GM12878 (cell line): ENCODE measurements at regions of chrX and their contacts with region 1.

Region 1: GRCh38 chrX:18390941-18391538 is 34.4 kb upstream of the CDKL5 start:
- DNase-seq: peak; percentile 13
- ATAC-seq: peak; percentile 67
- H3K4me3 ChIP-seq: no peak overlapping the region
- H3K27ac ChIP-seq: no peak overlapping the region
- H3K4me1 ChIP-seq: no peaks in the 10 kb centered on the region
- H3K27me3 ChIP-seq: no peaks in the 10 kb centered on the region
- CTCF ChIP-seq: peak; percentile 35 to 73 (median 68); a peak in 5 of 6 replicates
- EP300 ChIP-seq: no peak
- POLR2A ChIP-seq: no peak
- RAD21 ChIP-seq: peak; percentile 92

Region 2: DNA sequence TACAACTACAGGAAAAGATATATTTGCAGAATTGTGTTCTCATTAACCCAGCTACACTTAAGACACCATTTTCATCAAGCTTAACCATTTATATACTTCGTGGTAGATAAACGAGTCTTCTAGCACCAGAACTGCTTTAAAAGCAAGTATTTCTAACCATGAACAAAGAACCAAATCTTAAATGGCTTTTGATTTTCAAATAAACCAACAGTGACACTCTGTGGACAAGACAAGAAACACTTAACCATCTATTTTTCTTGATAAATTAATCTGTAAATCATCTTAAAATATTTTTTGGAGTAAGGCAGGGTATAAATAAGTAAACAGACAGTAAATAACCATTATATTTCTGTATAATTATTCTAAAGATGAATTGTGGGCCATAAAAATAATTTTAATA is 180.6 kb before region 1 on chrX:
- CTCF ChIA-PET with region 1: no interaction called
- POLR2A ChIA-PET with region 1: no interaction called
- RAD21 ChIA-PET with region 1: no interaction called
- SMC1A ChIA-PET with region 1: no interaction called
- in situ Hi-C with region 1: no loop called
- intact Hi-C with region 1: no loop called
- DNase-seq: no peak
- ATAC-seq: no peak
- H3K4me3 ChIP-seq: no peak overlapping the region
- H3K27ac ChIP-seq: no peak overlapping the region
- H3K4me1 ChIP-seq: no peaks in the 10 kb centered on the region
- H3K27me3 ChIP-seq: no peaks in the 10 kb centered on the region
- CTCF ChIP-seq: no peak
- EP300 ChIP-seq: no peak
- POLR2A ChIP-seq: no peak
- RAD21 ChIP-seq: 0 out of 2 replicates have a peak, but pooled peaks have one; percentile 2

Region 3: GRCh38 chrX:18354369-18355223 is 36.4 kb before region 1 on chrX and contains the start of gene SCML2:
- CTCF ChIA-PET with region 1: no interaction called
- POLR2A ChIA-PET with region 1: no interaction called
- RAD21 ChIA-PET with region 1: no interaction called
- SMC1A ChIA-PET with region 1: no interaction called
- in situ Hi-C with region 1: no loop called
- intact Hi-C with region 1: no loop called
- DNase-seq: no peak
- ATAC-seq: peak; percentile 74
- H3K4me3 ChIP-seq: no peak within 1 kb of the TSS; the same call in 1 of the 2 replicates
- H3K27ac ChIP-seq: no peak within 1 kb of the TSS
- H3K4me1 ChIP-seq: no peaks in the 10 kb centered on the region
- H3K27me3 ChIP-seq: peaks cover 0 to 3% of the 10 kb centered on the region in 2 experiments; a peak in 2 of 4 replicates
- CTCF ChIP-seq: no peak
- EP300 ChIP-seq: no peak
- POLR2A ChIP-seq: no peak
- RAD21 ChIP-seq: no peak
- polyA plus RNA-seq, gene SCML2: 1.5 to 2.9 TPM

Region 4: DNA sequence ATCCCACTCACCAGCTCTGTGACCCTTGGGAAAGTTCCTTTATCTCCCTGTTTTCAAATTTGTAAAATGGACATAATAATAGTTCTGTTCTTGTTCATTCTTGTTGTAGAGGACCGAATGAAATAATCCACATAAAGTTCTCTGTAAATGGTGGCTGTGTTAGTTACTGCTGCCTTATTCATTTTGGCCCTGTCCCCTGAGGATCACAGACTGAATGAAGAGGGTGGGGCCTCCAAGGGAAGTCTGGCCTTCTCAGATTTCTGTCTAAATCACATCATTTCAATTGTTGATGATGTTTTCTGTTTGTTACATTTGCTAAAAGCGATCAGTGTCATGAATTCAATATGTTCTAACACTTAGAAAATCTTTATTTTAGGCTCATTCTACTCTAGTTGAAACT is 434.3 kb after region 1 on chrX:
- CTCF ChIA-PET with region 1: no interaction called
- POLR2A ChIA-PET with region 1: no interaction called
- RAD21 ChIA-PET with region 1: no interaction called
- SMC1A ChIA-PET with region 1: no interaction called
- in situ Hi-C with region 1: no loop called
- intact Hi-C with region 1: no loop called
- DNase-seq: no peak
- ATAC-seq: no peak
- H3K4me3 ChIP-seq: no peak overlapping the region
- H3K27ac ChIP-seq: no peak overlapping the region
- H3K4me1 ChIP-seq: no peaks in the 10 kb centered on the region
- H3K27me3 ChIP-seq: no peaks in the 10 kb centered on the region
- CTCF ChIP-seq: no peak
- EP300 ChIP-seq: no peak
- POLR2A ChIP-seq: no peak
- RAD21 ChIP-seq: no peak

Region 5: GRCh38 chrX:18886344-18887161 is 495.5 kb after region 1 on chrX:
- CTCF ChIA-PET with region 1: interaction called, 5 read pairs
- POLR2A ChIA-PET with region 1: no interaction called
- RAD21 ChIA-PET with region 1: interaction called, 4 read pairs
- SMC1A ChIA-PET with region 1: interaction called, 3 read pairs
- in situ Hi-C with region 1: loop called (anchors 10 kb)
- intact Hi-C with region 1: loop called (anchors 5 kb)
- DNase-seq: peak; percentile 66
- ATAC-seq: peak; percentile 87
- H3K4me3 ChIP-seq: peak overlapping the region; percentile 47
- H3K27ac ChIP-seq: peak overlapping the region; percentile 87
- H3K4me1 ChIP-seq: peaks cover 28% of the 10 kb centered on the region
- H3K27me3 ChIP-seq: no peaks in the 10 kb centered on the region
- CTCF ChIP-seq: peak; percentile 62 to 70 (median 69)
- EP300 ChIP-seq: no peak
- POLR2A ChIP-seq: 0 out of 2 replicates have a peak, but pooled peaks have one; percentile 34
- RAD21 ChIP-seq: peak; percentile 66

Region 6: DNA sequence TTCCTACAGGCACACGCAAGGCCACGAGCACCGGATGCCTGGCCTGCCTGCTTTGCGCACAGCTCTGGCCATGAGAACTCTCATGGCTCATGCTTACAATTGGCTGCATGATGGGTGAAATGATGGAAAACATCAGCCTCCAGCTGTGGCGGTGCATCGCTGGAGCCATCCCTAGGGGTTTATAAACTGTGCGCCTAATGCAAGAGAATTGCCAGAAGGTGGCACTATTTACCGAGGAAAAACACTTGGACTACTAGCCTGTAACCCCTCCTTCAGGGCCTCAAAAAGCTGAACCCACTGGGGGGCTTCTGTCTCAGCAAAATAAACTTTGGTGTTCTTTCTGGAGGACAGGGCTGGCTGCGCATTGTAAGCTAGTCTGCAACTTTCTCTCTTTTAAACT is 540.9 kb after region 1 on chrX:
- CTCF ChIA-PET with region 1: no interaction called
- POLR2A ChIA-PET with region 1: no interaction called
- RAD21 ChIA-PET with region 1: no interaction called
- SMC1A ChIA-PET with region 1: no interaction called
- in situ Hi-C with region 1: no loop called
- intact Hi-C with region 1: loop called (anchors 10 kb)
- DNase-seq: no peak
- ATAC-seq: peak; percentile 59
- H3K4me3 ChIP-seq: no peak overlapping the region
- H3K27ac ChIP-seq: no peak overlapping the region
- H3K4me1 ChIP-seq: no peaks in the 10 kb centered on the region
- H3K27me3 ChIP-seq: no peaks in the 10 kb centered on the region
- CTCF ChIP-seq: peak; percentile 20 to 40 (median 40); a peak in 5 of 6 replicates
- EP300 ChIP-seq: no peak
- POLR2A ChIP-seq: no peak
- RAD21 ChIP-seq: peak; percentile 47

Region 7: DNA sequence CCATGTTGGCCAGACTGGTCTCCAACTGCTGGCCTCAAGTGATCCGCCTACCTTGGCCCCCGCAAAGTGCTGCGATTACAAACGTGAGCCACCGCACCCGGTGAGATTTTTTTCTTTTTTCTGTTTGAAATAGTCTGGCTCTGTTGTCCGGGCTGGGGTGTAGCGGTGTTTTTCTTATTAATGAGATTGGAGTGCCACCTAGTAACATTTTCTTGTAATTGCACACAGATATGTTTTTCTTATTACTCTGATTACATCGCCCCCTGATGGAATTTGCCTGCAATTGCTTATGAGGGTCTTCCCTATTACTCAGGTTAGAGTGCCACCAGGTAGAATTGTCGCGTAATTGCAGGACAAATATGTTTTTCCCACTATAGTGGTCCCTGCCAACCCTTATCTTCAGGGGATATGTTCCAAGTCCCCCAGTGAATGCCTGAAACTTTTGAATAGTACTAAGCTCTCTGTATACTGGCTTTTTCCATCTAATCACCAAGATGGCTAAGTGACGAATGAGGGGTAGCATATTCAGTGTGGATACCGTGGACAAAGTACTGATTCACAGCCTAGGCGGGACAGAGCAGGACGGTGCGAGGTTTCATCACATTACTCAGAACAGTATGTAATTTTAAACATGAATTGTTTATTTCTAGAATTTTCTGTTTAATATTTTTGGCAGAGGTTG is 944.0 kb after region 1 on chrX:
- CTCF ChIA-PET with region 1: interaction called, 13 read pairs
- POLR2A ChIA-PET with region 1: no interaction called
- RAD21 ChIA-PET with region 1: interaction called, 3 read pairs
- SMC1A ChIA-PET with region 1: interaction called, 7 read pairs
- in situ Hi-C with region 1: loop called (anchors 5 kb)
- intact Hi-C with region 1: loop called (anchors 1 kb)
- DNase-seq: peak; percentile 15
- ATAC-seq: peak; percentile 83
- H3K4me3 ChIP-seq: no peak overlapping the region
- H3K27ac ChIP-seq: no peak overlapping the region
- H3K4me1 ChIP-seq: no peaks in the 10 kb centered on the region
- H3K27me3 ChIP-seq: no peaks in the 10 kb centered on the region
- CTCF ChIP-seq: peak; percentile 51 to 77 (median 52)
- EP300 ChIP-seq: no peak
- POLR2A ChIP-seq: no peak
- RAD21 ChIP-seq: peak; percentile 45